Brain microvascular endothelial cell (primary cell): ENCODE measurements at regions of chr3 and their contacts with region 1.

Region 1: DNA sequence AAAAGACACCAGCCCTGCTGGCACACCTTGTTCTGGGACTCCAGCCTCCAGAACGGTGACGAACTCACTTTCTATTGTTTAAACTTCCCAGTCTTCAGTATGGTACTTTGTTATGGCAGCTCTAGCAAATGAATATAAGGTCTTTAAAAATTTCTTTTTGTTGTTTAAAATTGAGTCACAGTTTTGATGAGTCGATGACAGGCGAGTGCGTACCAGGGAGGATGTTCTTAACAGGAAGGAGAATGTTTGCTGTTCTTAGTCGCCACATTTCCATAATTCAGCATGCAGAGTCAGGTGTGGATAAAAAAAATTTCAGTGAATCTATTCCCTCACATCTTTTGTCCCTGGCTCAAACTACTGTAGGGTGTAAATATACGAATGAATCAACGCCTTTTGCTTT is 12.4 kb downstream of the DNASE1L3 start:
- DNase-seq: no peak
- H3K4me3 ChIP-seq: no peak overlapping the region
- H3K27ac ChIP-seq: no peak overlapping the region
- H3K27me3 ChIP-seq: no peaks in the 10 kb centered on the region
- CTCF ChIP-seq: no peak

Region 2: GRCh38 chr3:58288011-58288728 is 89.8 kb after region 1 on chr3:
- in situ Hi-C with region 1: loop called (anchors 10 kb)
- DNase-seq: no peak
- H3K4me3 ChIP-seq: no peak overlapping the region
- H3K27ac ChIP-seq: no peak overlapping the region
- H3K27me3 ChIP-seq: no peaks in the 10 kb centered on the region
- CTCF ChIP-seq: peak; percentile 44